Breast epithelium (tissue), 4 donors: ENCODE measurements at regions of chr3 and their contacts with region 1.

Region 1: GRCh38 chr3:61078048-61078752 is 173.1 kb downstream of the FHIT start:
- DNase-seq: no peak
- H3K4me3 ChIP-seq: no peak overlapping the region
- H3K27ac ChIP-seq: no peak overlapping the region
- H3K4me1 ChIP-seq: no peaks in the 10 kb centered on the region
- H3K27me3 ChIP-seq: no peaks in the 10 kb centered on the region
- CTCF ChIP-seq: no peak
- POLR2A ChIP-seq: no peak

Region 2: GRCh38 chr3:59595830-59596229 is 1482.4 kb before region 1 on chr3:
- intact Hi-C with region 1: loop called (anchors 5 kb)
- DNase-seq: no peak
- H3K4me3 ChIP-seq: no peak overlapping the region
- H3K27ac ChIP-seq: no peak overlapping the region
- H3K4me1 ChIP-seq: no peaks in the 10 kb centered on the region
- H3K27me3 ChIP-seq: no peaks in the 10 kb centered on the region
- CTCF ChIP-seq: no peak
- POLR2A ChIP-seq: no peak

Region 3: GRCh38 chr3:61029194-61029593 is 49.0 kb before region 1 on chr3:
- intact Hi-C with region 1: loop called (anchors 5 kb)
- DNase-seq: no peak
- H3K4me3 ChIP-seq: no peak overlapping the region
- H3K27ac ChIP-seq: no peak overlapping the region
- H3K4me1 ChIP-seq: no peaks in the 10 kb centered on the region
- H3K27me3 ChIP-seq: no peaks in the 10 kb centered on the region
- CTCF ChIP-seq: no peak
- POLR2A ChIP-seq: no peak

Region 4: GRCh38 chr3:61043156-61043555 is 35.0 kb before region 1 on chr3:
- intact Hi-C with region 1: no loop called
- DNase-seq: no peak
- H3K4me3 ChIP-seq: no peak overlapping the region
- H3K27ac ChIP-seq: no peak overlapping the region
- H3K4me1 ChIP-seq: no peaks in the 10 kb centered on the region
- H3K27me3 ChIP-seq: no peaks in the 10 kb centered on the region
- CTCF ChIP-seq: no peak
- POLR2A ChIP-seq: no peak